ENCODE measurements at regions of chr1 and their contacts with region 1.

Region 1: DNA sequence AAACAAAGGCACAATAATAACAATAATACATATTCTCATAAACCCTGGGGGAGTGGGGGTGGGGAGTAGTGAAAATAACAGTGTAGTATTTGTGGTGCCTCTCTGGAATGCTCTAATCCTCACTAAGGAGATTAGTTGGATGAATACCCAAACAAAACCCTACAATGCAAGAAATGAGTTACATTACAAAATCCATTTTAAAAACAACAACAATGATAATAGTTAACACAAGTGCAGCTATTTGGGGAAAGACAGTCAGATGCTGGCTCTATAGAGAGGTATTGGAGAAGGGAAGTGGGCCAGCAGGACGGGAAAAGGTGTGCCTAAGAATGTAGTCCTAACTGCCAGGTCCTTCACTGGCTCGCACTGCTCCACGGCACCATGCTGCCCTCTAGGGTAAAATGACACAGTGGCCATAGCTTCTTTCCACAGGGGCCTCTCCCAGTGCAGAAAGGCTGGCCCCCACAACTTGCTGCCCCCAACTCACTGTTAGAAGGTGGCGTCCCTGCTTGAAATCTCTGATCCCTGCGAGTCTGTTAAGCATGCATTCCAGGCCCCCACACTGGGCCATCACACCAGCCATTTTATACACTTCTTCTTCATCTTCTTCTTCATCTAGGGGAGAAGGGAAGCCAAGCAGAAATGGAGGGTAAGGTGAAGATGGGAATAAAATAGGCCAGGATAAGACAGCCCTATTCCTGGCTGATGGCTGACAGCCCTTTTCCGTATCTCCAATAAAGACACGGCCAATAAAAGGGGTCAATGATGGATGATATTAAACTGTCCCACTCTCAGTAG is 113.8 kb downstream of the UBR4 start:
- DNase-seq: peak; percentile 39
- H3K4me3 ChIP-seq: no peak overlapping the region
- H3K27ac ChIP-seq: no peak overlapping the region
- H3K4me1 ChIP-seq: no peaks in the 10 kb centered on the region
- H3K27me3 ChIP-seq: no peaks in the 10 kb centered on the region
- CTCF ChIP-seq: peak; percentile 65 to 82

Region 2: GRCh38 chr1:18597160-18598042 is 498.8 kb before region 1 on chr1:
- CTCF ChIA-PET with region 1: no interaction called
- dilution Hi-C with region 1: no loop called
- in situ Hi-C with region 1: no loop called
- intact Hi-C with region 1: loop called (anchors 1 kb)
- DNase-seq: peak; percentile 21
- H3K4me3 ChIP-seq: no peak overlapping the region
- H3K27ac ChIP-seq: no peak overlapping the region
- H3K4me1 ChIP-seq: no peaks in the 10 kb centered on the region
- H3K27me3 ChIP-seq: no peaks in the 10 kb centered on the region
- CTCF ChIP-seq: peak; percentile 91 to 99

Region 3: DNA sequence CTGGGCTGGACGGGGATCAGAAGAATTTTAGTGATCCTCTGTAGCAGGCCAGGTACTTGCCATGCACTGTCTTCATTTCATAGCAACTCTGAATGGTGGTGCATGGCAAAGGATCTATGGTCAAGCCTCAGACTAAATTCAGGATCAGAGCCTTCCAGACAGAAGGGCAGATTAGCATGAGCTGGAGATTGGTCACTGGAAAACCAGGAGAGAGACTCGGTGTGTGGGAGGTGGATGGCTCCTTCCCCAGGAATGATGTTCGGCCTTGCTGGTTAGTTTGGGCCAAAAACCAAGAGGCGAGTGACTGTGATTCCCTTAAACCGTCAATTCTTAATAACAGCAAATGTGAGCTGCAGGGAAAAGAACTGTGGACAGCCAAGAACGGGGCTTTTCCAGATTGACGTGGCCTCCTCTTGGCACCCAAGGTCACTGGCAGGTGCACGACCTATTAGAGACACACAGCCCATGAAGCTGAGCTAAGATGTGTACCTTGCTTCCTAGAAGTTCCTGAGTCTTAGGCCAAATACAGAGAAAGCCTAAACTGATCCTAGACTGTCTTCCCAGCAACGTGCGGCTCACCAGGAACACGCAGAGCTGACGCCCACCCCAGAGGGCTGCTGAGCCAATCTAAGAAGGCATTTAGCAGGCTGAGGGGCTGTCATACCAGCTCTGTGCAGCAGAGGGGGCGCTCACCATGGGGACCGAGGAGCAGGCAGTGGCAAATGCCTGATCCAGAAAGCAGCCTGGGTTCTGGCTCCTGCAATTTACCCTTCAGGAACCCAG is 212.4 kb before region 1 on chr1:
- CTCF ChIA-PET with region 1: no interaction called
- dilution Hi-C with region 1: no loop called
- in situ Hi-C with region 1: no loop called
- intact Hi-C with region 1: loop called (anchors 1 kb)
- DNase-seq: peak; percentile 47
- H3K4me3 ChIP-seq: no peak overlapping the region
- H3K27ac ChIP-seq: no peak overlapping the region
- H3K4me1 ChIP-seq: peaks cover 29% of the 10 kb centered on the region
- H3K27me3 ChIP-seq: no peaks in the 10 kb centered on the region
- CTCF ChIP-seq: peak; percentile 93 to 95

Region 4: GRCh38 chr1:18962121-18962721 is 134.0 kb before region 1 on chr1:
- CTCF ChIA-PET with region 1: no interaction called
- dilution Hi-C with region 1: loop called (anchors 5 kb)
- in situ Hi-C with region 1: no loop called
- intact Hi-C with region 1: no loop called
- DNase-seq: peak; percentile 29
- H3K4me3 ChIP-seq: no peak overlapping the region
- H3K27ac ChIP-seq: peak overlapping the region; percentile 33
- H3K4me1 ChIP-seq: peaks cover 28% of the 10 kb centered on the region
- H3K27me3 ChIP-seq: no peaks in the 10 kb centered on the region
- CTCF ChIP-seq: no peak

Region 5: DNA sequence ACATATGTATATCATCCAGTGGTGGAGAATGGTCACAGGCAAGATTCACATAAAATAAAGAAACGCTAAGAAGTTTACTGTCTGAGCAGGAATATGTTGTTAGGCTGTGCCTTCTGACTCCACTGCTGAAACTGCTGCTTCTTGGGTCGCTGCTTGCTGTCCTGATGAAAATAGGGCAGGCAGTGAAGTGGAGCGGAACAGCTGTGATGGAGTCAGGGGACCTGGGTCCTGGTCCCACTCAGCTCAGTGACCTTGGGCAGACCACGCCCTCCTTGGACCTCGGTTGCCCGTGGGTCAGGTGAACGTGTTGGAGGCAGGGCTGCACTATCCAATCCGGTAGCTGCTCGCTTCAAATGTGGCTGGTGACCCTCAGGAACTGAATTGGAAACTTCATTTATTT is 106.3 kb before region 1 on chr1:
- CTCF ChIA-PET with region 1: no interaction called
- dilution Hi-C with region 1: loop called (anchors 5 kb)
- in situ Hi-C with region 1: no loop called
- intact Hi-C with region 1: no loop called
- DNase-seq: no peak
- H3K4me3 ChIP-seq: no peak overlapping the region
- H3K27ac ChIP-seq: no peak overlapping the region
- H3K4me1 ChIP-seq: no peaks in the 10 kb centered on the region
- H3K27me3 ChIP-seq: no peaks in the 10 kb centered on the region
- CTCF ChIP-seq: no peak

Region 6: GRCh38 chr1:19021845-19022244 is 74.4 kb before region 1 on chr1:
- CTCF ChIA-PET with region 1: no interaction called
- dilution Hi-C with region 1: no loop called
- in situ Hi-C with region 1: no loop called
- intact Hi-C with region 1: no loop called
- DNase-seq: no peak
- H3K4me3 ChIP-seq: no peak overlapping the region
- H3K27ac ChIP-seq: no peak overlapping the region
- H3K4me1 ChIP-seq: no peaks in the 10 kb centered on the region
- H3K27me3 ChIP-seq: no peaks in the 10 kb centered on the region
- CTCF ChIP-seq: no peak

Region 7: GRCh38 chr1:19042675-19043578 is 53.3 kb before region 1 on chr1:
- CTCF ChIA-PET with region 1: interaction called, 17 read pairs
- dilution Hi-C with region 1: no loop called
- in situ Hi-C with region 1: no loop called
- intact Hi-C with region 1: no loop called
- DNase-seq: no peak
- H3K4me3 ChIP-seq: no peak overlapping the region
- H3K27ac ChIP-seq: no peak overlapping the region
- H3K4me1 ChIP-seq: peaks cover 3% of the 10 kb centered on the region
- H3K27me3 ChIP-seq: no peaks in the 10 kb centered on the region
- CTCF ChIP-seq: peak in 1 of 2 donors; percentile 25